A549 (cell line): ENCODE measurements at regions of chr2 and their contacts with region 1.

Region 1: GRCh38 chr2:47339745-47340541 is 63.0 kb upstream of the MSH2 start:
- DNase-seq: peak in 1 of 2 experiments; percentile 59
- ATAC-seq: peak; percentile 15 to 54; a peak in 5 of 6 replicates
- H3K4me3 ChIP-seq: no peak overlapping the region
- H3K27ac ChIP-seq: peak overlapping the region; percentile 12 to 74; a peak in 4 of 6 replicates
- H3K4me1 ChIP-seq: peaks cover 27% of the 10 kb centered on the region
- CTCF ChIP-seq: no peak
- EP300 ChIP-seq: no peak
- POLR2A ChIP-seq: no peak
- RAD21 ChIP-seq: no peak

Region 2: DNA sequence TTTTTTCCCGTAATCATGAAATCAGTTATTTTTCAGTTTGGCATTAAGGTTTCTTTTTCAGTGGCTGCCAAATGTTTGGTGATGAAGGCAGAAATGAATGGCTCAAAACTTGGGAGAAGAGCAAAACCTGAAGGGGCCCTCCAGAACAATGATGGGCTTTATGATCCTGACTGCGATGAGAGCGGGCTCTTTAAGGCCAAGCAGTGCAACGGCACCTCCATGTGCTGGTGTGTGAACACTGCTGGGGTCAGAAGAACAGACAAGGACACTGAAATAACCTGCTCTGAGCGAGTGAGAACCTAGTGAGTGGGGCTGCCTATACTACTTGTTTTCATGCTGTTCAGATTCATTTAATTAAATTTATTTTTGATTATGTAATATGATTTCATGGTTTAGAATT is 33.8 kb after region 1 on chr2:
- CTCF ChIA-PET with region 1: interaction called, 37 read pairs
- POLR2A ChIA-PET with region 1: interaction called, 6 read pairs
- DNase-seq: peak; percentile 48 to 60
- ATAC-seq: peak; percentile 62 to 77; a peak in 4 of 6 replicates
- H3K4me3 ChIP-seq: no peak overlapping the region
- H3K27ac ChIP-seq: no peak overlapping the region
- H3K4me1 ChIP-seq: peaks cover under 1% of the 10 kb centered on the region; the same call in 1 of the 3 replicates
- CTCF ChIP-seq: peak; percentile 38; the same call in 2 of the 3 replicates
- EP300 ChIP-seq: no peak
- POLR2A ChIP-seq: no peak
- RAD21 ChIP-seq: peak; percentile 59 to 67; a peak in 4 of 5 replicates

Region 3: DNA sequence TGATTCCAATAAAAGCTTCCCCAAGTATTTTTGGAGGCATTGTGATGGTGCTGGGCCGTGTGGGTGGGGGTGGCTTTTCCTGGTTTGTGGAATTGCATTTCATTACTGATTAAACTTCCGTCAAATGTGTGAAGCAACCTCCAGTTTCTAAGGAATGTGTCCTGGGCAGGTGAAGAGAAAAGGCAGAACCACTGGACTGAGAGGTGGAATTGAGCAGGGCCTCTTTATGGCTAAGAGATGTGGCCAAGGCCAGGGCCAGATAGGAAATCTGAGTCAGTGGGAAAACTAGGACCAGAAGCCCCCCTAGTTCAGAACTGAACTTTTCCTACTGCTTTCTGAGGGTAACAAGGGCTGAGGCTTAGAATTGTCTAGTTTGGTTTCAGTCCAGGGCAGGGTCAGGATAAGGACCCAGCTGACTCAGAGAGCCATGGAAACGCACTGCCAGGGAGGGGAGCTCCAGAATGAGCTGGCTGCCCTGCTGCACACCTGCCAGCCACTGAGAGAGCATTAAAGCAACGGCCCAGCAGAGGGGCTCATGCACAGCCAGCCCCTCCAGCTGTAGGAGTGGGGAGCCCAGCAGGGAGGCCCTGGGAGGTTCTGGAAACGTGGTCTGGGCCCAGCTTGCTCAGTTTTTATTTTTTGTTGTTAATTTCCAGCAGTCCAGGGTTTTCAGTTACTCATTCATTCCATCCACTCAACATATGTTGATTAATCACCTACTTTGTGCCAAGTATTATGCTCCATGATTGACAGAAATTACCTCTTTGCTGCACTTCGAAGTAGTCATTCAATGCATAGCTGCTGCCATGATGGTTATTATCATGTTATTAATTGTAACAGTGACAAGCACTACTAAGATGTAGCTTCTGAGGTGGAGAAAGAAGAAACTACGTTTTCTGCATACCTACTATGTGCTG is 219.1 kb after region 1 on chr2:
- CTCF ChIA-PET with region 1: no interaction called
- POLR2A ChIA-PET with region 1: no interaction called
- DNase-seq: no peak
- ATAC-seq: peak in 1 of 2 experiments; percentile 25; a peak in 1 of 6 replicates
- H3K4me3 ChIP-seq: no peak overlapping the region
- H3K27ac ChIP-seq: no peak overlapping the region
- H3K4me1 ChIP-seq: no peaks in the 10 kb centered on the region
- CTCF ChIP-seq: no peak
- EP300 ChIP-seq: no peak
- POLR2A ChIP-seq: no peak
- RAD21 ChIP-seq: no peak

Region 4: DNA sequence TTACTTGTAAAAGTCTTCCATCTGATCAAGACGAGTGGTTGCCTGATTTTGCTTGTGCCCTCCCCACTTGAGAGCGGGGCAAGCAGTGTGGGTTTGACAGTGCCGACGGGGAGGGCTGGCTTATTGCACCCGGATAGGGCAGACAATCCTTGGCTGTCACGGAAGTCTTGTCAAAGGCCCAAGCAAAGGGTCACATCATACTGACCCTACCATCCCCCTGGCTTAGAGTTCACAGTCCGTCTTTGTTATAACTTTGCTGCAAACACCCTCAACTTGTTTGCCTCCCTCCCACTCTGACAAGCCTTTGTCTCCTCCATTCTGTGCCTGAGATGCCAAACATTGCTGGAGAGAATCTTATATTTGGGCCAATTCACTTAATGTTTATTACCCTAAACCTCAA is 277.1 kb after region 1 on chr2:
- CTCF ChIA-PET with region 1: no interaction called
- POLR2A ChIA-PET with region 1: no interaction called
- DNase-seq: no peak
- ATAC-seq: no peak
- H3K4me3 ChIP-seq: no peak overlapping the region
- H3K27ac ChIP-seq: no peak overlapping the region
- H3K4me1 ChIP-seq: no peaks in the 10 kb centered on the region
- CTCF ChIP-seq: no peak
- EP300 ChIP-seq: no peak
- POLR2A ChIP-seq: no peak
- RAD21 ChIP-seq: no peak